Colonic mucosa (tissue), 4 donors: ENCODE measurements at regions of chr14 and their contacts with region 1.

Region 1: GRCh38 chr14:105617201-105617777 is 90.9 kb downstream of the TMEM121 start:
- DNase-seq: no peak
- H3K4me3 ChIP-seq: no peak overlapping the region
- H3K27ac ChIP-seq: no peak overlapping the region
- H3K4me1 ChIP-seq: no peaks in the 10 kb centered on the region
- H3K27me3 ChIP-seq: no peaks in the 10 kb centered on the region
- CTCF ChIP-seq: no peak

Region 2: GRCh38 chr14:105760691-105761346 is 143.5 kb after region 1 on chr14:
- intact Hi-C with region 1: loop called (anchors 5 kb)
- DNase-seq: no peak
- H3K4me3 ChIP-seq: no peak overlapping the region
- H3K27ac ChIP-seq: no peak overlapping the region
- H3K4me1 ChIP-seq: no peaks in the 10 kb centered on the region
- H3K27me3 ChIP-seq: no peaks in the 10 kb centered on the region
- CTCF ChIP-seq: no peak